ENCODE measurements at regions of chr10 and their contacts with region 1.

Region 1: GRCh38 chr10:70925377-70926225 is 37.2 kb upstream of the PCBD1 start:
- DNase-seq: peak; percentile 41
- H3K4me3 ChIP-seq: no peak overlapping the region
- H3K27ac ChIP-seq: no peak overlapping the region
- H3K4me1 ChIP-seq: peaks cover 0 to 3% (median 0%) of the 10 kb centered on the region in 4 donors
- H3K27me3 ChIP-seq: peaks cover 14% of the 10 kb centered on the region
- CTCF ChIP-seq: peak; percentile 86 to 98 (median 96)
- EP300 ChIP-seq: no peak
- POLR2A ChIP-seq: no peak

Region 2: DNA sequence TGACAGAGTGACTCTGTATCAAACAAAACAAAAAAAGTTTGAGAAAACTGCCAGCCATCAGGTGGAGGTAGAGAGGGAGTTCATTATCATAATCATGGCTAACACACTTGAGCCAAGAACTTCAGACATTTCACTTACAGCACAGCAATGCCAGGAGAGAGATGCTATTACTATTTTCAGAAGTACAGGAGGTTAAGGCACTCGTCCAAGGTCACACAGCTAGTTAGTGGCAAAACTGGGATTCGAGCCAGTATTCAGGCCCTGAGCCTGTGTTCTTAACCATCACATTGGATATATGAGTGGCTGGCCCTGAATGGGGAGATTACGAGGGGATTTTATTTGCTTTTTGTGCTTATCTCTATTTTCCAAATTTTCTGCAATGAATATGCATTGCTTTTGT is 262.0 kb after region 1 on chr10:
- in situ Hi-C with region 1: loop called in 1 of 4 experiments (anchors 25 kb)
- intact Hi-C with region 1: no loop called
- DNase-seq: no peak
- H3K4me3 ChIP-seq: no peak overlapping the region
- H3K27ac ChIP-seq: no peak overlapping the region
- H3K4me1 ChIP-seq: no peaks in the 10 kb centered on the region
- H3K27me3 ChIP-seq: peaks cover 4% of the 10 kb centered on the region
- CTCF ChIP-seq: no peak
- EP300 ChIP-seq: no peak
- POLR2A ChIP-seq: no peak

Region 3: DNA sequence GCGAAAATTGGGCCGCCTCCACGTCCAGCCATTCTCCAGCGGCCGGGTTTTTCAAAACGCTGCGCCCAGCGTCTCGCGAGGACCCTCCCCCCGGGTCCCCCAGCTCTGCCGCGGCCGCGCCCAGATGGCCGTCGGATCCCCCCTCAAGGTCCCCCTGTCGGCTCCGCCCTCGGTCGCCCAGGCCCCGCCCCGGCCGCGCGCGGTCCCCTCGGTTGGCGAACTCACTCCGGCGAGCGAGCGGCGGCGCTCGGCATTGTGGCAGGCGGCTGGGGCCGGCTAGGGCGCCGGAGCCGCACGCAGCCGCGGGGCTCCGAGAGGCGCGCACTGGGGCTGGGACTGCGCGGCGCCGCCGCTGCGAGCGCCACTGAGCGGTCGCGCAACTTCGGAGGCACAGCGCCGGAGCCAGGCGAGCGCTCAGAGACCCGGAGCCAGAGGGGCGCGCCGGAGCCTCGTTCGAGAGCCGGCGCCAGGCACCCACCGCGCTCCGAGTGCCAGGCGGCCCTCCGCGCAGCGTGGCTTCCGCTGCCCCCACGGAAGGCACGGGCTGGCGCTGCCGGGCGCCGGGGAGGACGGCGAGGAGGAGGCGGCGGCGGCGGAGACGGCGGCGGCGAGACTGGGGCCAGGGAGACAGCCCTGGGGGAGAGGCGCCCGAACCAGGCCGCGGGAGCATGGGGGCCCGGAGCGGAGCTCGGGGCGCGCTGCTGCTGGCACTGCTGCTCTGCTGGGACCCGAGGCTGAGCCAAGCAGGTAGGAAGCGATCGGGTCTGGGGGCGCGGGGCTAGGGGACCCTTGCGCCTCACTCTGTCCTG is 286.9 kb after region 1 on chr10 and contains the start of gene UNC5B:
- in situ Hi-C with region 1: loop called in 1 of 4 experiments (anchors 10 kb)
- intact Hi-C with region 1: loop called (anchors 5 kb)
- DNase-seq: peak; percentile 89
- H3K4me3 ChIP-seq: peak within 1 kb of the TSS; percentile 50 to 78 (median 68)
- H3K27ac ChIP-seq: peak within 1 kb of the TSS; percentile 90 to 93 (median 90)
- H3K4me1 ChIP-seq: peaks cover 12 to 45% (median 32%) of the 10 kb centered on the region in 4 donors
- H3K27me3 ChIP-seq: peaks cover 55% of the 10 kb centered on the region
- CTCF ChIP-seq: peak in 4 of 5 experiments; percentile 16 to 43 (median 20)
- EP300 ChIP-seq: no peak
- POLR2A ChIP-seq: peak; percentile 26
- total RNA-seq, gene UNC5B: 12.3 to 74.1 (median 41.2) TPM

Region 4: DNA sequence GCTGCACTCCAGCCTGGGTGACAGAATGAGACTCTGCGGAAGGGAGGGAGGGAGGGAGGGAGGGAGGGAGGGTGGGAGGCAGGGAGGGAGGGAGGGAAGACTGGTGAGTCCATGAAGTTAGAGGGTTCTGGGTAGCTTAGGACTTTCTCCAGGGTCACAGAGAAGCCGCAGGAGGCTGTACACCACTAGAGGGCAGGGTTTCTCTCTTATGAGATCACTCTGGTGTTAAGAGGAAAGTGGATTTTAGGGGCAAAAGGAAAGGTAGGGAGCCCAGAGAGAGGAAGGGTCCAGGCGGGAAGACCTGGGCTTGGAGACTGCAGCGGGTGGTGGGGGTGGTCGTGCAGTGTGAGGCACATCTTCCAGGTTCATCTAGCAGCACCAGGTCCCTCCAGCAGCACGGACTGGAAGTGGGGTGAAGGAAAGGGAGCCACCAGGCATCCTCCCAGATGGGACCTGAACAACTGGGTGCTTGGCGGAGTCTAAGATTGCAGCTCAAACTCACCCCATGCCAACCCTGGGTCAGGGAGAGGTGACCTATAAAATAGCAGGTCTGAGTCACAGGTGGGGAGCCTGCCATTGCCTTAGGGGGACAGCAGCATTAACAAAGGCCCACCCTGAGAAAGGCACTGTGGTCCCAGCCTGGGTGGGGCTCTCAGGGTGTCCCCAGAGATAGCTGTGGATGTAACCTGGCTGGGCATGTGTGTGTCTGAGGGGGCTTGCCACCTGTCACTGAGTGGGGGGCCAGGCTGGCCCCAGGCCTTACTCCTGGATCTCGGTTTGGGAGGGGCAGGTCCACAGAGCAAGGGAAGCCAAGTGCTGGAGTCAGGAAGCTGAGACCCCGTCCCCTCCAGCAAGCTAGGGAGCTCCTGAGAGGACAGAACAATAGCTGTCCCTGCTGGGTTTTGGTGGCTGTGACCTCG is 345.0 kb after region 1 on chr10:
- in situ Hi-C with region 1: loop called in 1 of 4 experiments (anchors 10 kb)
- intact Hi-C with region 1: no loop called
- DNase-seq: peak; percentile 64
- H3K4me3 ChIP-seq: no peak overlapping the region
- H3K27ac ChIP-seq: no peak overlapping the region
- H3K4me1 ChIP-seq: peaks cover 2 to 16% (median 13%) of the 10 kb centered on the region in 4 donors
- H3K27me3 ChIP-seq: no peaks in the 10 kb centered on the region
- CTCF ChIP-seq: peak; percentile 44 to 69 (median 55)
- EP300 ChIP-seq: no peak
- POLR2A ChIP-seq: no peak

Region 5: DNA sequence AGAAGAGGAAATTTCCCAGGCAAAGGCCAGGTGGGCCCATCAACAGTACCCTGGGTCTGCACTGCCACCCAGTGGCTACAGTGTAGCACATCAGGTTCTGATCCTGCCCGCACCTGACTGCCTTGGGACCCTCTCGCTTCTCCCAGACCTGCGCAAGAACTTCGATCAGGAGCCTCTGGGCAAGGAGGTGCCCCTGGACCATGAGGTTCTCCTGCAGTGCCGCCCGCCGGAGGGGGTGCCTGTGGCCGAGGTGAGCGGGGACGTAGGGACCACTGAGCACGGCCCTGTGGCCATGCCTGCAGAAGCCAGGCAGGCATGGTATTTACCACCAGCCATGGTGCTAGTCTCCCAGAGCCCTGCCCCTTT is 359.6 kb after region 1 on chr10:
- in situ Hi-C with region 1: loop called in 3 of 4 experiments (anchors 10 kb)
- intact Hi-C with region 1: loop called (anchors 5 kb)
- DNase-seq: peak; percentile 39
- H3K4me3 ChIP-seq: no peak overlapping the region
- H3K27ac ChIP-seq: no peak overlapping the region
- H3K4me1 ChIP-seq: no peaks in the 10 kb centered on the region
- H3K27me3 ChIP-seq: no peaks in the 10 kb centered on the region
- CTCF ChIP-seq: peak; percentile 61 to 76 (median 69)
- EP300 ChIP-seq: no peak
- POLR2A ChIP-seq: no peak

Measured in transverse colon (tissue), 4 donors.